K562 (cell line): ENCODE measurements at regions of chr22 and their contacts with region 1.

Region 1: DNA sequence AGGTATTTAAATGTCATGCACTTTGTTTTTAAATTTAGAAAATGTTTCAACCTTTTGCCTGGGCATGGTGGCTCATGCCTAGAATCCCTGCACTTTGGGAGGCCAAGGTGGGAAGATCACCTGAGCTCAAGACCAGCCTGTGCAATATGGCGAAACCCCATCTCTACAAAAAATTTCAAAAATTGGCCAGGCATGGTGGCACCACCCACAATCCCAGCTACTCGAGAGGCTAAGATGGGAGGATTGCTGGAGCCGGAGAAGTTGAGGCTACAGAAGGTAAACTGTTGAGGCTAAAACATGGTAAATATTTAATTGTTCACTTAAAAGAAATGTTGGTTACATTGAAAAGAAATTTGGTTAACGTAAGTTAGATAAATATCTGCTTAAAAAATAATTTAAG is 108.4 kb upstream of the IGLL5 start:
- DNase-seq: no peak
- ATAC-seq: no peak
- H3K4me3 ChIP-seq: no peak overlapping the region
- H3K27ac ChIP-seq: no peak overlapping the region
- H3K4me1 ChIP-seq: no peaks in the 10 kb centered on the region
- H3K27me3 ChIP-seq: peaks cover 7 to 18% of the 10 kb centered on the region in 2 experiments; a peak in 3 of 5 replicates
- CTCF ChIP-seq: no peak
- EP300 ChIP-seq: no peak
- POLR2A ChIP-seq: no peak
- RAD21 ChIP-seq: no peak

Region 2: DNA sequence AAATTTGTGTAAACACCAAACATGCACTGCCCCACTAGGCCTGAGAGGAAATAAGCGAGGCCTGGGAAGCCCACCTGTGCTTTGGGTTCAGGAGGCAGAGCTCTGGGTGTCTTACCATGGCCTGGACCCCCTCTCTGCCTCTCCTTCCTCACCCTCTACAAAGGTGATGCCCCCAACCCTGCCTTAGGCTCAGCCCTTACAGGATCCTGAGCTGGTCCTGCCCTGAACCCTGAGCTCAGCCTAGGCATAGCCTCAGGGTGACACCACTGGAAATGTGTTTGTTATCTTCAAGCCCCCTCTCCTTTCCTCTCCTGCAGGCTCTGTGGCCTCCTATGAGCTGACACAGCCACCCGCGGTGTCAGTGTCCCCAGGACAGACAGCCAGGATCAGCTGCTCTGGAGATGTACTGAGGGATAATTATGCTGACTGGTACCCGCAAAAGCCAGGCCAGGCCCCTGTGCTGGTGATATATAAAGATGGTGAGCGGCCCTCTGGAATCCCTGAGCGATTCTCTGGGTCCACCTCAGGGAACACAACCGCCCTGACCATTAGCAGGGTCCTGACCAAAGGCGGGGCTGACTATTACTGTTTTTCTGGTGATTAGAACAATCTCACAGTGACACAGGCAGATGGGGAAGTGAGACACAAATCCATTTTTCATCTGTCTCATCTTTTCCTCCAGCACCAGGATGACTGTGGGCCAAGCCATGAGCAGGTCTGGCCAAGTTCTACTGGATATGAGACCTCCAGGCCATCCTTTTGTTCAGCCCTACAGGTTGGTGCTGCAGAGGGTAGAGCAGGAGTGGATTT is 17.0 kb before region 1 on chr22:
- CTCF ChIA-PET with region 1: no interaction called
- POLR2A ChIA-PET with region 1: interaction called, 12 read pairs
- in situ Hi-C with region 1: no loop called
- intact Hi-C with region 1: no loop called
- DNase-seq: no peak
- ATAC-seq: peak; percentile 6
- H3K4me3 ChIP-seq: no peak overlapping the region
- H3K27ac ChIP-seq: no peak overlapping the region
- H3K4me1 ChIP-seq: no peaks in the 10 kb centered on the region
- H3K27me3 ChIP-seq: peaks cover 17 to 21% of the 10 kb centered on the region in 2 experiments
- CTCF ChIP-seq: no peak
- EP300 ChIP-seq: no peak
- POLR2A ChIP-seq: no peak
- RAD21 ChIP-seq: no peak